ENCODE measurements at regions of chr21 and their contacts with region 1.

Region 1: GRCh38 chr21:40143822-40144525 is 276.7 kb downstream of the PCP4 start:
- DNase-seq: peak in 1 of 2 donors; percentile 46
- ATAC-seq: peak; percentile 29

Region 2: DNA sequence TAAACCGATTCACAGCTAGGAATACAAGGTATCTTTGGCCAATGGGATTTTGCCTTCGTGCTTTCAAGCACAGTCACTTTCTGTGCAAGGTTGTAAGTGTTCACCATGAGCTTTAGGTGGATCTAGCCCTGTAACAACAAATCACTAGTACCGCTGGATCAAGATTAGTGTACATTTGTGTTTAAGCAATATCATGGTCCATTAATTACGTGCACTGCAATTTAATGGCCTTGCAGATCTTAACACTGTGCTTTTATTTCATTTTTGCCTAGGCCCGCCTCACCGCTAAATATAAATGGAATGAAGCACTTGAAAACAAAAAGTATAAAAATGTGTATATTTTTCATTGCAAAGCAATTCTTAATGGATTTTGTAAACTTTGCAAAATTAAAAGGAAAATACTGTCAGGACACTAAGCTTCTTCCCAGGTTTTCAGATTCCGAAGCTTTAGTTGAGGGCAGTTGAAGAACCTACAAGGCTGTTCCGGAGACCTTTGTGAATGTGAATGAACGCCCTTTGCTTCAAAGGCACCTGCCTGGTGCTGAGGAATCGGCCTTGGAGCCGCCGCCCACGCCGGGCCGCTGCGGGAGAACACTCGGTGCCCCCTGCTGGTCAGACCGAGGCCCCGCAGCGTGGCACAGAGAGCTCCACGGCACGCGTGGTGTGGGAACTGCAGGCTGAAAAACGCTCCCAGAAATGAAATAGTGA is 242.1 kb after region 1 on chr21:
- intact Hi-C with region 1: loop called in 1 of 2 experiments (anchors 10 kb)
- DNase-seq: peak in 1 of 2 donors; percentile 49
- ATAC-seq: peak; percentile 58

Region 3: DNA sequence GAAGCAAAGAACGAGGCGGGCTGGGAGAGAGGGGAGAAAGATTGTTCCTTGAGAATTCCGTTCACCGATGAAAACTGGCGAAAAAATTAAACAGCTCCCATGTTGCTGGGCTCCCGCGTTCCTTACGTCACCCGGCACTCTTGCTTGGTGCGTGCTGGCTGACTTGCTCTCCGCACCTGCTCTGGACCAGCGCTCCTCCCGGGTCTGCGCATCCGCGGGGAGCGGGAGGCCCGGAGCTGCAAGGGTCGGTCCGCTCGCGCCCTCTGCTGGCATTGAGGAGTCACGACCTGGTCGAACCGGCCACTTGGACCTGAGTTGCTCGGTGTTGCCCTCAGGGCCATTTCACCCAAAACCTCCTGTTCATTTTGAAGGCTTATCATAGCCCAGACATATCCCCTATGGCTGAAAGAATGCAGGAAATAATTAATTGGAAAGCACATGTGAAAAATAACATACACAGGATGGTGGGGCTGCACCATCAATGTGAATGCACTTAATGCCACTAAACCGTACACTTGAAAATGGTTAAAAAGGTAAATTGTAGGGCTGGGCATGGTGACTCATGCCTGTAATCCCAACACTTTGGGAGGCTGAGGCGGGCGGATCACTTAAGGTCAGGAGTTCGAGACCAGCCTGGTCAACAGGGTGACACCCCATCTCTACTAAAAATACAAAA is 925.1 kb after region 1 on chr21:
- intact Hi-C with region 1: loop called in 1 of 2 experiments (anchors 5 kb)
- DNase-seq: peak; percentile 50 to 74
- ATAC-seq: peak; percentile 77

Measured in left colon (tissue), 2 donors.